Spleen (tissue), 13 donors: ENCODE measurements at regions of chr11 and their contacts with region 1.

Region 1: DNA sequence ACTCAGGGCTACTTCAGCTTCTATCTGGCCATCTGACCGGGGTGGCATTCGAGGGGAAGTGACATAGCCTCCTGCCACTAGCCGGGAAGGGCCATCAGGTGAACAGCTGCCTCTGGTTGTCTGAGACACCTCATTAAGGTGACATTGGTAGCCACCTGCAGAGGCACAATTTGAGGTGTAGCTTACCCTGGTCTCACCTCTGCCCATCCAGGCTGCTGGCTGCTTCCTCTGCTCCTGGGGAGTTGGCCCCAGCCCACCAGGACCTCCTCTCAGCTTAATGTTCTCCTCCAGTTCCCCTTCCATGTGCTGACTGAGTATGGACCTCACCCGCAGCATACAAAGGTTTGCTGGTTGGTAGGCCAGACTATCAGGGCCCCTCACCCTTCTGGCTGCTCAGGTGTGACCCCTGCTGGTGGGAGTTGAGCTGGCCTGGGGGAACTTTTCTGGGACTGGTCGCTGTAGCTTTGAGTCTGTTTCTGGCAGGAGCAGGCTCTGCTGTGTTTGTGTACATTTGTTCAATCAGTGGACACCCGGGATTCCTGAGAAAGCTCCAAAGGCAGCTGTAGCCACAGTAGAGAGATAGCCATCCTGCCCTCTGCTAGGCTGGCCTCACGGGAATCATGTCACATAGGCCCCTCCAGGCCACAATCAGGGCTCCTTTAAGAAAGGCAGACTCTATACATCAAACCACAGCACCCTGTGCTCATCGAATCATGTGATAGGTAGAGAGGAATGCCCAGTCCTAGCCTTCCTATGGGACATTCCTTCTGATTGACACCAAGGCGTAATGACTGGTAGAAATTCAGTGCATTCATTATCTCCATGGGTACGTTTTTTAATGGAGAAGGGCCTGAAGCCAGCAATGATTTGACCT is 295.1 kb upstream of the PLET1 start:
- DNase-seq: peak; percentile 82
- H3K4me3 ChIP-seq: no peak overlapping the region
- H3K27ac ChIP-seq: no peak overlapping the region
- H3K4me1 ChIP-seq: no peaks in the 10 kb centered on the region
- H3K27me3 ChIP-seq: no peaks in the 10 kb centered on the region
- CTCF ChIP-seq: peak in 10 of 11 experiments; percentile 9 to 73 (median 62)
- POLR2A ChIP-seq: no peak

Region 2: GRCh38 chr11:112280268-112281126 is 275.2 kb before region 1 on chr11:
- intact Hi-C with region 1: loop called (anchors 10 kb)
- DNase-seq: peak; percentile 81
- H3K4me3 ChIP-seq: peak overlapping the region; percentile 38 to 78 (median 49)
- H3K27ac ChIP-seq: peak overlapping the region in 4 of 8 donors; percentile 26 to 69 (median 62)
- H3K4me1 ChIP-seq: peaks cover 0 to 19% (median 8%) of the 10 kb centered on the region in 6 donors
- H3K27me3 ChIP-seq: no peaks in the 10 kb centered on the region
- CTCF ChIP-seq: peak; percentile 44 to 91 (median 69)
- POLR2A ChIP-seq: no peak

Region 3: GRCh38 chr11:112983887-112984286 is 428.2 kb after region 1 on chr11:
- intact Hi-C with region 1: no loop called
- DNase-seq: no peak
- H3K4me3 ChIP-seq: no peak overlapping the region
- H3K27ac ChIP-seq: no peak overlapping the region
- H3K4me1 ChIP-seq: no peaks in the 10 kb centered on the region
- H3K27me3 ChIP-seq: no peaks in the 10 kb centered on the region
- CTCF ChIP-seq: no peak
- POLR2A ChIP-seq: no peak